Upper lobe of right lung (tissue), 1 donor: ENCODE measurements at regions of chr3 and their contacts with region 1.

Region 1: GRCh38 chr3:10164546-10165393 is at the start of gene IRAK2:
- DNase-seq: peak; percentile 91
- ATAC-seq: peak; percentile 97
- H3K4me3 ChIP-seq: peak within 1 kb of the TSS; percentile 73
- H3K27ac ChIP-seq: peak within 1 kb of the TSS; percentile 56
- H3K4me1 ChIP-seq: no peaks in the 10 kb centered on the region
- H3K27me3 ChIP-seq: no peaks in the 10 kb centered on the region
- CTCF ChIP-seq: peak; percentile 94
- total RNA-seq, gene IRAK2: 5.2 TPM

Region 2: GRCh38 chr3:9792405-9793160 is 372.2 kb before region 1 on chr3 and contains the starts of genes ARPC4 and TADA3:
- intact Hi-C with region 1: no loop called
- DNase-seq: peak; percentile 97
- ATAC-seq: peak; percentile 94
- H3K4me3 ChIP-seq: peak within 1 kb of the TSS; percentile 100
- H3K27ac ChIP-seq: peak within 1 kb of the TSS; percentile 99
- H3K4me1 ChIP-seq: peaks cover 33% of the 10 kb centered on the region
- H3K27me3 ChIP-seq: no peaks in the 10 kb centered on the region
- CTCF ChIP-seq: peak; percentile 13
- total RNA-seq, gene ARPC4: 148 TPM
- total RNA-seq, gene TADA3: 55.8 TPM

Region 3: GRCh38 chr3:10224784-10225665 is 60.3 kb after region 1 on chr3:
- intact Hi-C with region 1: loop called (anchors 5 kb)
- DNase-seq: no peak
- ATAC-seq: peak; percentile 95
- H3K4me3 ChIP-seq: no peak overlapping the region
- H3K27ac ChIP-seq: peak overlapping the region; percentile 17
- H3K4me1 ChIP-seq: peaks cover 33% of the 10 kb centered on the region
- H3K27me3 ChIP-seq: no peaks in the 10 kb centered on the region
- CTCF ChIP-seq: peak; percentile 90